IMR-90 (cell line): ENCODE measurements at regions of chr19 and their contacts with region 1.

Region 1: DNA sequence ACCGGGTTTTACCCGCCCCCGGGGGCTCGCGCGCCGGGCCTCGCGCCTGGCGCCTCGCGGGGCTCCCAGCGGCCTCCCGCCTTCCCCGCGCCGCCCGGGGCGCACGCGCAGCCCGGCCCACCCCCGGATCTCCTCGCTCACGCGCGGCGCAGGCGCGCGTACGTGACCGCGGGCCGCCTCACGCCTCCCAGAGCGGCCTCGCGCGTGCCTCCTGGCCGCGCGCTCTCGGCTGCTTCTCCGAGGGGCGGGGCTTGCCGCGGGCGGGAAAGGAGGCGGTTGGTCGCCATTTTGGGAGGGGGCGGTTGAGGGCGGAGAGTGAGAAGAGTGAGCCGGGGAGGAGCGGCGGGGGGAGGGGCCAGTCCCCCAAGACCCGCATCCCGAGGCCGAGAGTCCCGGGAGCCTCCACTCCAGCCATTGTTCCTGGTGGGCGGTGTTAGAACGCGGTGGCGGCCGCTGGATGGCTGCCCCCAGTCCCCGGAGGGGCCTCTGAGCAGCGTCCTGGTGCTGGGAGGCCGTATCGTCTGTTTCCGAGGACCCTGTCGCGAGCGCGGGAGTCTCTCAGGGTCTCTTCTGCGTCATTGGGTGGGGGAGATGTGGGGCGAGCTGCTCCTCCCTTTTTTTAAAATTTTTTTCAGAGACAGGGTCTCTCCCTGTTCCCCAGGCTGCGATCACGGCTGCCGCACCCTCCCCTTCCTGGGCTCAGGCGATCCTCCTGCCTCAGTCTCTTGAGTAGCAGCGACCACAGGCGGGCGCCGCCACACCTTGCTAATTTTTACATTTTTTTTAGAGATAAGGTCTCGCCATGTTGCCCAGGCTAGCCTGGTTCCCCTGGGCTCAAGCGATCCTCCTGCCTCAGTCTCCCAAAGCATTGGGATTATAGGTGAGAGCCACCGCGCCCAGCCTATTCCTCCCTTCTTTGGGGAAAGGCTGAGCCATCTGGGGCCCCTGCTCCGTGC is at the start of gene ZNF541:
- DNase-seq: peak; percentile 12
- ATAC-seq: peak; percentile 67
- H3K4me3 ChIP-seq: peak within 1 kb of the TSS; percentile 19; the same call in 1 of the 2 replicates
- H3K27ac ChIP-seq: no peak within 1 kb of the TSS
- H3K4me1 ChIP-seq: no peaks in the 10 kb centered on the region
- H3K27me3 ChIP-seq: peaks cover 8% of the 10 kb centered on the region; the same call in 1 of the 2 replicates
- CTCF ChIP-seq: no peak
- POLR2A ChIP-seq: no peak
- RAD21 ChIP-seq: no peak
- total RNA-seq, gene ZNF541: not detected in 2 replicates

Region 2: GRCh38 chr19:47097396-47098201 is 475.8 kb before region 1 on chr19:
- CTCF ChIA-PET with region 1: no interaction called
- POLR2A ChIA-PET with region 1: interaction called, 16 read pairs
- dilution Hi-C with region 1: no loop called
- in situ Hi-C with region 1: no loop called
- intact Hi-C with region 1: no loop called
- DNase-seq: no peak
- ATAC-seq: no peak
- H3K4me3 ChIP-seq: no peak overlapping the region
- H3K27ac ChIP-seq: no peak overlapping the region
- H3K4me1 ChIP-seq: peaks cover 7% of the 10 kb centered on the region
- H3K27me3 ChIP-seq: no peaks in the 10 kb centered on the region
- CTCF ChIP-seq: no peak
- POLR2A ChIP-seq: no peak
- RAD21 ChIP-seq: no peak